ENCODE measurements at regions of chr2 and their contacts with region 1.

Region 1: GRCh38 chr2:127067620-127068350 is 39.2 kb downstream of the BIN1 start:
- DNase-seq: peak; percentile 80
- ATAC-seq: peak; percentile 75
- H3K4me3 Mint-ChIP-seq: no peak overlapping the region
- H3K27ac Mint-ChIP-seq: no peak overlapping the region
- H3K4me1 Mint-ChIP-seq: 0 out of 2 replicates have a peak, but pooled peaks cover 5% of the 10 kb centered on the region
- H3K27me3 Mint-ChIP-seq: no peaks in the 10 kb centered on the region
- CTCF ChIP-seq: peak; percentile 75

Region 2: DNA sequence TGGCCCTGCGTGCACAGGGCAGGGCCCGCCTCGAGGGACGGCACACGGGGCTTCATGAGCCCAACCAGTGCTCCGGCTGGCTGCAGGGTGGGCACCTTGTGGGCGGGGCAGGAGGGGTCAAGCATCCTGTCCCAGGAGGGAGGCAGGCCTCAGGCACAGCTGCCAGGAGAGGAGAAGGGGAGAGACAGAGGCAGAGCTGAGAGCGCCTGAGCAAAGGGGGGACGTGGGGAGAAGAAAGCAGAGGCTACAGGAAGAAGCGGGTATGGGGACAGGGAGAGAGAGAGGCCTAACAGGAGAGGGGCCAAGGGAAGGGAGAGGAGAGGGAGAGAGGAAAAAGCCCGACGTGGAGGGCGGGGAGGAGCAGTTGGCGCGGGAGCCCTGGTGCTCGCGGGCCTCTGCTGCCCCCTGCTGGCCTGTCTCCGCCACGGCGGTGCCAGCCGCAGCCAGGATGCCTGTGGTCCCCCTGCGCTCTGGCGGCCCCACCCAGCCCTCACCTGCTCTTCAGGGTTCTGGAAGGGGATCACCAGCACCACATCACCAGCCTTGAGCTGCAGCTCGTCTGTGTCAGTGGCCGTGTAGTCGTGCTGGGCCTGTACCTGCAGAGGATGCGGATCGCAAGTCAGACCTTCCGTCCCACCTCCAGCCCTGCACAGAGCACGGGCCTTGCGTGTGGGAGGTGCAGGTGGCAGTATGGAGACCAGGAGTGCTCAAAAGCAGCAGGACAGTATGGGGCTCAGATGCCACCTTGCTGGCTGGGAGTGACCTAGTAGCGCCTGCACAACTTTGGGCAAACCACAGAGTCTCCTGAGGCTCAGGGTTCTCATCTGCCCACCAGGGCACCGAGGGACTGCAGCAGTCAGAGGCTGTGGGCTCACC is 17.6 kb before region 1 on chr2:
- CTCF ChIA-PET with region 1: interaction called, 15 read pairs
- POLR2A ChIA-PET with region 1: no interaction called
- DNase-seq: peak; percentile 84
- ATAC-seq: peak; percentile 81
- H3K4me3 Mint-ChIP-seq: no peak overlapping the region
- H3K27ac Mint-ChIP-seq: no peak overlapping the region
- H3K4me1 Mint-ChIP-seq: no peaks in the 10 kb centered on the region
- H3K27me3 Mint-ChIP-seq: peaks cover 3% of the 10 kb centered on the region
- CTCF ChIP-seq: peak; percentile 91

Region 3: DNA sequence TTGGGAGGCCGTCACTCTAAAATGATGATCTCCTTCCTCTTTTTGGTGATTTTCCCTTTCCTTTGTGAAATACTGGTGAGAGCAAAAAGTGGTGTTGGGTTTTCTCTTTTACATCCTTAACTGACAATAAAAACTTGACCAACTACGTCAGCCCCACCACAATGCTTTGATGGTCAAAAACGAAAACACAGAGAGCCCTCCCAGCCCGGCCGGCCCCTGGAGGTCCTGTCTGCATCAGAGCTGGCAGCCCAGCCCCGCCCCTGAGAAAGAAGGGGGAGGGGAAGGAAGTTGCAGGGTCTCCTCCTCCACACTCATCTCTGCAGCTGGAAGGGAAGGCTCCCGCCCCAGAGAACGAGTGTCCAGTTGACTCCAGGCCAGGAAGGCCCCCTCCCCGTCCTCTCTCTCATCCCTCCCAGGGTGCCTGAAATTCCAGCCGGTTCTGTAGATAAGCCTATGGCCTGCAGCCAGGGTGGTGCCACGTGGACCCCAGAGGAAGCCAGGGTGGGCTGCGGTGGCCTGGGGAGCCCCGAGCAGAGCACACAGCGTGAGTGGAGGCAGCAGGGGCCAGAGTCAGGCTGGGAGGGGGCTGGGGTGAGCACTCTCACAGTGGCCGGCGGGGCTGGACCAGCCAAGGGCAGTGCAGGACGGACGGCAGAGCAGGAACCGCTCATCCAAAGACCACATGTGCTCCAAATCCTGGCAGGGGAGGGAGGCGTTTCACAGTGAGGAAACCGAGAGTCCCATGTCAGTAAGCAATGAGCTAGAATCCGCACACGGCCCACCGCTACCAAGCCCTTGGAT is 19.4 kb after region 1 on chr2:
- CTCF ChIA-PET with region 1: interaction called, 25 read pairs
- POLR2A ChIA-PET with region 1: no interaction called
- DNase-seq: peak; percentile 69
- ATAC-seq: peak; percentile 80
- H3K4me3 Mint-ChIP-seq: peak overlapping the region; percentile 36
- H3K27ac Mint-ChIP-seq: peak overlapping the region; percentile 84
- H3K4me1 Mint-ChIP-seq: peaks cover 46% of the 10 kb centered on the region
- H3K27me3 Mint-ChIP-seq: no peaks in the 10 kb centered on the region
- CTCF ChIP-seq: no peak

Region 4: DNA sequence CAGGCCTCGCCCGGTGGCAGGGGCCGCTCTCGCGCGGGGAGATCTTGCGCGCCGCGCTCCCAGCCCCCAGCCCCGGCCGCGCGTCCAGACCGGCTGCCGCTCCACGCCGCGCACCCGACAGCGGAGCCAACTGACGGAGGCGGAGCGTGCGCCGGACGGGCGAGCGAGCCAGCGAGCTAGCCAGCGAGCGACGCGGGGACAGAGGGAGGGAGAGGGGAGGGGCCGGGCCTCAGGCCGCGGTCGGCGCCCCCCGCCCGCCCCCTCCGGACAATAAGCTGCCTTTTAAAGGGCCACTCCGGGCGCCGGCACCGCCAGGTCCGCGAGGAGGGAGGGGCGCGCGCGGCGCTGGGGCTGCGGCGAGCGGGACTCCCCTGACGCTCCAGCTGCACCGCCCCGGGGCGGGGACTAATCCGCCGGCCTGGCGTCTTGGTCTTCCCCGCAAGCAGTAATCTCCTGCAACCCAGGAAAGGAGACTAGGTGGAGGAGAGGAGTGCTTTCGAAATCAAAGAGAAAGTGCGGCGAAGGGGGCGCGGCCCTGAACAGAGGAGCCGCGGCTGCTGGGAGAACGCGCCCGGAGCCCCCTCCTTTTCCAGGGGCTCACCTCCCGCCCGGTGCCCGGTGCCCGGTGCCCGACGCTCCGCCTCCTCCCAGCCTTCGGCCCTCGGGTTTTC is 39.3 kb after region 1 on chr2 and contains the start of gene BIN1:
- CTCF ChIA-PET with region 1: interaction called, 33 read pairs
- POLR2A ChIA-PET with region 1: interaction called, 4 read pairs
- DNase-seq: peak; percentile 91
- ATAC-seq: peak; percentile 80
- H3K4me3 Mint-ChIP-seq: peak within 1 kb of the TSS; percentile 86
- H3K27ac Mint-ChIP-seq: peak within 1 kb of the TSS; percentile 49
- H3K4me1 Mint-ChIP-seq: peaks cover 26% of the 10 kb centered on the region
- H3K27me3 Mint-ChIP-seq: peaks cover 3% of the 10 kb centered on the region; the same call in 1 of the 2 replicates
- CTCF ChIP-seq: no peak
- total RNA-seq, gene BIN1: 38.9 to 42.5 TPM (median 41.6 TPM) in 3 replicates

Region 5: DNA sequence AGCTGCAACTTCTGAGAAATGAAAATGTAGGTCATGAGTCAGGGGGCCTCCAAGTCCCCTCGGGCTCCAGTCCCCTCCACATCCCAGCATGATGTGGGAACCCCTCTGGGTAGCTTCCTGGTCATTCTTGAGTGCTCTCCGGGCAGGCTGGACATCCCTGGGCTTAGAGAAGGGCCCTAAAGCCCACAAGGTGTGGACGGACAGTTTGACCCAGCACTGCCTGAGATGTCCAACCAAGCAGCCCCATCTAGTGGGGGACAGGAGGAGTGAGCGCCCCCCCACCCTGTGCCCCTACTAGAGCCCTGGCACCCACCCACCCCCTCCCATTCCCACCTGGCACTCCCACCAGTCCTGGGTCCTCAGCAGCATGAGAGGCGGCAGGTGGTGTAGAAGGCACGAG is 106.4 kb after region 1 on chr2:
- CTCF ChIA-PET with region 1: interaction called, 34 read pairs
- POLR2A ChIA-PET with region 1: no interaction called
- DNase-seq: peak; percentile 43
- ATAC-seq: peak; percentile 65
- H3K4me3 Mint-ChIP-seq: no peak overlapping the region
- H3K27ac Mint-ChIP-seq: no peak overlapping the region
- H3K4me1 Mint-ChIP-seq: peaks cover 13% of the 10 kb centered on the region
- H3K27me3 Mint-ChIP-seq: no peaks in the 10 kb centered on the region; the same call in 1 of the 2 replicates
- CTCF ChIP-seq: no peak

Region 6: DNA sequence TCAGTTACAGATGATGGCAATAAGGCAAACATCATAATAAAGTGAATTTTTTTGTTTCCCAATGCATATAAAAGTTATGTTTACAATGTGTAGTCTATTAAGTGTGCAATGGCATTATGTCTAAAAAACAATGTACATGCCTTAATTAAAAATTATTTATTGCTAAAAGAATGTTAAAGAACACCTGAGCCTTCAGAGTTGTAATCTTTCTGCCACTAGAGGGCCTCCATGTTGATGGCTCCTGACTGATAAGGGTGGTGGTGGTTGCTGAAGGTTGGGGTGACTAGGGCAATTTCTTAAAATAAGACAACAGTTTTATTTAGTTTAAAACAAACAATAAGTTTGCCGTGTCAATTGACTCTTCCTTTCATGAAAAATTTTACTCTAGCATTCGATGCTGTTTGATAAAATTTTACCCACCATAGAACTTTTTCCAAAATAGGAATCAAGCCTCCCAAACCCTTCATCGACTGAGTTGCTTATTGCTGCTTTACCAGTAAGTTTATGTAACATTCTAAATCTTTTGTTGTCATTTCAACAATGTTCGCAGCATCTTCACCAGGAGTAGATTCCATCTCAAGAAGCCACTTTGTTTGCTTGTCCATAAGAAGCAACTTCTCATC is 287.7 kb after region 1 on chr2:
- CTCF ChIA-PET with region 1: no interaction called
- POLR2A ChIA-PET with region 1: no interaction called
- DNase-seq: no peak
- ATAC-seq: 0 out of 2 replicates have a peak, but pooled peaks have one; percentile 46
- H3K4me3 Mint-ChIP-seq: no peak overlapping the region
- H3K27ac Mint-ChIP-seq: no peak overlapping the region
- H3K4me1 Mint-ChIP-seq: peaks cover 20% of the 10 kb centered on the region
- H3K27me3 Mint-ChIP-seq: no peaks in the 10 kb centered on the region; the same call in 1 of the 2 replicates
- CTCF ChIP-seq: peak; percentile 50; the same call in 1 of the 2 replicates

Measured in WTC11 (cell line).